Heart left ventricle (tissue), 16 donors: ENCODE measurements at regions of chr2 and their contacts with region 1.

Region 1: GRCh38 chr2:152175458-152176325 is at the start of gene STAM2:
- DNase-seq: peak; percentile 92 to 97 (median 94)
- ATAC-seq: peak; percentile 93 to 97 (median 95)
- H3K4me3 ChIP-seq: peak within 1 kb of the TSS; percentile 65 to 97 (median 72)
- H3K27ac ChIP-seq: peak within 1 kb of the TSS; percentile 92 to 100 (median 96)
- H3K4me1 ChIP-seq: peaks cover 0 to 43% (median 28%) of the 10 kb centered on the region in 12 donors
- H3K27me3 ChIP-seq: no peaks in the 10 kb centered on the region
- CTCF ChIP-seq: peak; percentile 94 to 99 (median 98)
- POLR2A ChIP-seq: peak in 1 of 2 donors; percentile 12
- total RNA-seq, gene STAM2: 21.4 to 36.1 (median 27.0) TPM

Region 2: DNA sequence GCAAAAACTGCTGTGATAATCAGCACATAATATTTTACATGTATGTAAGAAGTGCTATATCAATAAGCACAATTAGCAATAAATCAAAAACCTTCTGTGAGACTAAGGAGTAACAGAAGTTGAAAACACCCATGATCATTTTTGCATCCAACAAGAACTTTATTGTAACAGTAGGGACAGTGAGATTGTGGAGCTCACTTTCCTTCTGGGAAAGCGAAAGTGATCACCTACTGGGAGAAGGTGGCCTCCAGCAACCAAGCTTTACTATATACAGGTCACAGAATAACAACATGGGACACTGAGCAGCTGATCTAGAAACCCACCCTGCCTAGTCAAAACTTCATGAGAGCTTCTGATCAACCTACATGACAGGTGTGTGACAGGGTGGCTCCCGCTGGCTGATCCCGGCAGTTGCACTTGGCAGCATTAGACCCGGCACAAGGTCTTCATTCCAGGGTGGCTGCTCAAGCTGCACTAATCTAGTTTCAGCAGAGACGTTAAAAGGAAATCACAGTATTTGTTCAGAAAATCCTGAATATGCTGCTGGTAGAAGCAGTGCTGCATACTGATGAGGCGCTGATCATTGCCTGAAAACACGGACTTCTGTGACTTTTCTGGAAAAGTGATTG is 284.0 kb before region 1 on chr2:
- intact Hi-C with region 1: no loop called
- DNase-seq: no peak
- ATAC-seq: peak in 3 of 4 donors; percentile 41 to 65 (median 45)
- H3K4me3 ChIP-seq: peak overlapping the region in 9 of 12 donors; percentile 18 to 46 (median 30)
- H3K27ac ChIP-seq: no peak overlapping the region
- H3K4me1 ChIP-seq: peaks cover 0 to 11% (median 0%) of the 10 kb centered on the region in 12 donors
- H3K27me3 ChIP-seq: no peaks in the 10 kb centered on the region
- CTCF ChIP-seq: no peak
- POLR2A ChIP-seq: no peak

Region 3: DNA sequence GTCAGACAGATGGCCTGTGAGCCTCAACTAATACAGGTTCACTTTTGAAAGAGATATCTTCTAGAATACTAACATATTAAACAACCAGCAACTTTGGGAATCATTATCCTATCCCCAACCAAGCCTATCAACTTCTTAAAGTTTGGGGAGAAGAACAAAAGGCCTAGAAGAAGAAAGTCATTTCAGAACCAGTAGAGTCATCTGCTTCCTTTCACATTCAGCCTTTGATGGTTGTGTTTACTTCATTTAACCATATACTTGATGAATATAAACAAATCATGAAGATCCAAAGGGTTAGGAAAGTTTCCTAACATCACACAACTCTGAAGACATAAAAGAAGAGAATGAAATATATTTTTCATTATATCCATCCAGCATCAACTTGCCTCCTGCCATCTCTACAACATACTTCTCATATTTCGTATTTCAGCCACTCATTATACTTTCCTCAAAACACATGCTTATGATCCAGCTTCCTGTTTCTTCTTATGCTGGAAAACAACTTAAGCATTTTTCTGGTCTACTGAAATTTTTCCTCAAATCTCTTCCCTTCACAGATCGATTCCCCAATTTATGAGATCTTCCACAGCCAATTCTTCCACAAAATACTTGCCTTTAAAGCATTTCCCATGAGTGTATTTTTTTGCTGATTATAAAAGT is 191.1 kb before region 1 on chr2:
- intact Hi-C with region 1: no loop called
- DNase-seq: no peak
- ATAC-seq: no peak
- H3K4me3 ChIP-seq: no peak overlapping the region
- H3K27ac ChIP-seq: no peak overlapping the region
- H3K4me1 ChIP-seq: no peaks in the 10 kb centered on the region
- H3K27me3 ChIP-seq: no peaks in the 10 kb centered on the region
- CTCF ChIP-seq: no peak
- POLR2A ChIP-seq: no peak

Region 4: GRCh38 chr2:152298754-152299153 is 123.1 kb after region 1 on chr2:
- intact Hi-C with region 1: no loop called
- DNase-seq: no peak
- ATAC-seq: no peak
- H3K4me3 ChIP-seq: no peak overlapping the region
- H3K27ac ChIP-seq: no peak overlapping the region
- H3K4me1 ChIP-seq: no peaks in the 10 kb centered on the region
- H3K27me3 ChIP-seq: peaks cover 0 to 4% (median 0%) of the 10 kb centered on the region in 9 donors
- CTCF ChIP-seq: no peak
- POLR2A ChIP-seq: no peak

Region 5: DNA sequence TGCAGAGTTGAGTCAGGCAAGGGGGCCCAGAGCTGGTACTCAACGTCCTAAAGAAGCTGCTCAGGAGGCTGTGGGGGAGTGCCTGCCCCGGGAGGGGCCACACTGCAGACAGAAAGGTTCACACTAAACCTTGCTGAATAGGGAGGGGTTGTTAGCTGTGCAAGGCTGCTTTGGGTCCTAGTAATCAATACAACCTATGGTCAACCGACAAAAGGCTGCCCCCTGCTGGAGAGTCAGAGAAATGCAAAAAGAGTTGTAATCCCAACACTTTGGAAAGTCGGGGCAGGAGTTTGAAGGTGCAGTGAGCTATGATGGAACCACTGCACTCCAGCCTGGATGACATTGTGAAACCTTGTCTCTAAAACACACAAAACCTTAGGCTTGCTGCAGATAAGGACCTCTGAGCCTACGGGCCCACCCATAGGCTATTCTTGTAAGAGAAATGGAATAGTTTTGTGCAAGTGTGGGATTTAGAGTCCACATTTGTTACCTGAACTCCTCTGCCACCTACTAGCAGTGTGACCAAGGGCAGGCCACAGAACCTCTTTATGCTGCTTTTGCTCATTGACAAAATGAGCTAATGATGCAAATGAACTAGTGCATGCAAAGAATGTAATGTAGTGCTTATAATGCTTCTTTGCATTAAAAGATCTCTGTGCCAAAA is 460.1 kb after region 1 on chr2:
- intact Hi-C with region 1: loop called in 2 of 10 experiments (anchors 5 kb)
- DNase-seq: peak in 3 of 5 donors; percentile 39 to 54 (median 41)
- ATAC-seq: peak in 3 of 4 donors; percentile 55 to 63 (median 63)
- H3K4me3 ChIP-seq: no peak overlapping the region
- H3K27ac ChIP-seq: no peak overlapping the region
- H3K4me1 ChIP-seq: peaks cover 0 to 7% (median 0%) of the 10 kb centered on the region in 12 donors
- H3K27me3 ChIP-seq: no peaks in the 10 kb centered on the region
- CTCF ChIP-seq: peak; percentile 70 to 89 (median 80)
- POLR2A ChIP-seq: no peak

Region 6: DNA sequence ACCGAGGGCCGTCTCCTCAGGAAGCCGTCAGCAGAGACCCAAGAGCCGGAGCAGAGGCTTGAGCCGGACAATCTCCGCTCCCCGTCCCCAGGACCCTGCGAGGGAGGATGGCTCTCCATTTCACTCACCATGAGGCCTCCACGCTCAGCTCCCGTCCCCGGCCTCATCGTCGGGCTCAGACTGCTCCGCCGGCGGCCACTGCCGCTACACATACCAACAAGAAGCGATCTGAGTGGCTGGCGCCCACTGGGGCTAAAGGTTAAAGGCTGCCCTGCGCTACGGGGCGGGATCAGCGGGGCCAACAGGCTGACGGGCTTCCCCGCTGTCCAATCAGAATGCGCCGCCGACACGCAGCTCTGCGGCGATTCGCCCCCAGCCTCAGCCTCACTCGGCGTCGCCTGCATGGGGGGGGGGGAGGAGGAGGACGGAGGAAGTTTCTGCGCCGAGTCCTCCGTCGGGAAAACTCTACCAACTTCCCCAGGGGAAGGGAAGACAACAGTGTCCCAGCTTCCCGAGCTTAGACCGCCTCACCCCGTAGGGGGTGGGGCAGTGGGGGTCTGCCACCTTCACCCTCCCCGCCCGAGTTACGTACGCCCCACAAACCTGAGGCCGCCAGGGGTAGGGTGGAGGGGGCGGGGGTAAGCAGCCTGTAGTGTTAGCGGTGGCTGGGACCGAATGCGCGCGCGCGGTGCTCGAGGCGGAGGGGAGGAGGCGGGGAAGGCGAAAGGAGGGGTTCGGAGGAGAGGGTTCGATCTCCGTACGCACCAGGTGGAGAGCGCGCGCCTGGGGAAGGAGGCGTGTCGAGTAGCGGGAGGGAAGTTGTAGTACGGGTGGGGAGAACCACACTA is 541.8 kb after region 1 on chr2 and contains the start of gene PRPF40A:
- intact Hi-C with region 1: loop called in 5 of 10 experiments (anchors 5 to 10 kb)
- DNase-seq: peak; percentile 99 to 100 (median 99)
- ATAC-seq: peak; percentile 95 to 96 (median 96)
- H3K4me3 ChIP-seq: peak within 1 kb of the TSS; percentile 81 to 96 (median 90)
- H3K27ac ChIP-seq: peak within 1 kb of the TSS; percentile 86 to 99 (median 96)
- H3K4me1 ChIP-seq: peaks cover 0 to 57% (median 28%) of the 10 kb centered on the region in 12 donors
- H3K27me3 ChIP-seq: no peaks in the 10 kb centered on the region
- CTCF ChIP-seq: peak in 1 of 12 donors; percentile 14
- POLR2A ChIP-seq: peak in 1 of 2 donors; percentile 66
- total RNA-seq, gene PRPF40A: 30.7 to 53.5 (median 36.4) TPM

Region 7: DNA sequence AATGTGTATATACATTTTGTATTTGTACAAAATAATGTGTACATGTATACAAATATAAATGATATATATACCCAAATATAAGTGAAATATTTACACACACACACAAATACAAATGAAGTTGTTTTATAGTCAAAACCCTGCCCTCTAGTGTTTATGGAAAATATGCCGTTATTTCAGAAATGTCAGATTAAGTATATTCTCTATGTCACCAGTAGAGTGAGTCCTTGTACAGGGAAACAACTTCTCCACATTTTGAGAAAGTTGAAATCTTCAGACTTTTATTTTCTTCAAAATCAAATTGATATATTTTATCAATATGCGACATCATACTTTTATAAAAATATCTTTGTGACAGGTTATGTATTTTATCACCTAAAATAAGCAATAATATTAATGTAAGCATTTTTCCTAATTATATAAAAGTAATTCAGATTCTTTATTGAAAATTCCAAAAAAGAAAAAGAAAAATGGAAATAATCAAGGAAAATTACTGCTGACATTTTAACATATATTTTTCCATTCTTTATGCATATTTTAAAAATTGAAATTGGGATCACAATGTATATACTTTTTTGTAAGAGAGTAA is 565.1 kb after region 1 on chr2:
- intact Hi-C with region 1: loop called in 1 of 10 experiments (anchors 5 kb)
- DNase-seq: no peak
- ATAC-seq: no peak
- H3K4me3 ChIP-seq: no peak overlapping the region
- H3K27ac ChIP-seq: no peak overlapping the region
- H3K4me1 ChIP-seq: no peaks in the 10 kb centered on the region
- H3K27me3 ChIP-seq: no peaks in the 10 kb centered on the region
- CTCF ChIP-seq: peak; percentile 55 to 91 (median 66)
- POLR2A ChIP-seq: no peak